Activated T-helper 1 cell treated with anti-CD3 and anti-CD28 coated beads, Interleukin-12 subunit alpha, Interleukin-12 subunit beta, Interleukin-2, Interleukin-4 antibody, amounts not matched to agents 30 ng/mL and 10 ng/mL and 1 ng/mL, durations not matched to agents 14 hours and 24 hours and 36 hours (primary cell): ENCODE measurements at regions of chr14 and their contacts with region 1.

Region 1: DNA sequence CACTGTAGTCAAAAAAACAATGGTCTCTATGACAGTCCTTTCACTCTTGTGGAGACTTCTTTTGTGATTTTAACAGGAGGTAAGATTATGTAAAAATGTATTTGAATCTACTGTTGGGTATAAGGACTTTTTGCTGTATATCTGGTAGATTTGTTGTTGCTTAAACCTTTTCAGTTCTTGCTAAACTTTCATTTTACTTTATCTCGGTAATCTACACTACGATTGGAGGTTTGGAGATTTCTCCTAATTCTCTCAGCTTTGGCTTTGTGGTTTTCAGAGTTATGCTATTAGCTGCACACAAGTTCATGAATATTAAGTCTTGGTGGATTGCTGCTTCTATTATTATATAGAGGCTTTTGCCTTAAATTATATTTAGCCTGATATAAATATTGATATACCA is 116.6 kb upstream of the HIF1A start:
- DNase-seq: no peak
- H3K4me3 Mint-ChIP-seq: no peak overlapping the region
- H3K27ac Mint-ChIP-seq: no peak overlapping the region
- H3K4me1 Mint-ChIP-seq: peaks cover 39% of the 10 kb centered on the region
- H3K27me3 Mint-ChIP-seq: peaks cover 7% of the 10 kb centered on the region

Region 2: DNA sequence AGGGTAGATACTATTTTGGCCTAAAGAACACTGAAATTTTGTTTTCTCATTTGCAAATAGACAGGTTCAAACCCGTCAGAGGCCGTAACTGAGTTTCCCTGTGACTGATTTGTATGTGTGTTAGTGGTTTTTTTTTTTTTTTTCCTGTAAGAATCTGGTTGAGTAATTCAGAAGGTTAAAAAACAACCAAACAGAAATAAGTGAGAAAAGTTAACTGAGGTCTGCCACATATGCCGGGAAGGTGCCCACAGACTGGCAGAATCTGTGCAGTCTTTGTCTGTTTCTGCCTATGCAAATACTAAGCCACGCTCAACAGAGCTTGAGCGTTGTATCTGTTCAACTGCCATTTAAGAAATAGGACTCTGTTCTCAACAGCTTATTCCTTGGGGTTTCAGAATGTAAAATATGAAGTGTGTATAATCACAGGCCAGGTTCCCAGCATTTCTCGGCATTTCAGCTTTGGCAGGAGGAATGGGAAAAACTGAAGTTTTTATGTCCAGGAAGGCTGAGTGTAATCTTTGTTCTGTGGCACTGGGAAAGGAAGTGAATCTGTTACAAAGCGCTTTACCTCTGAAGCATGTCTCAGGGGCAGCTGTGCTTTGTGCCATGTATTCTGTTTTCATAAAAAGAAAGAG is 75.5 kb before region 1 on chr14:
- intact Hi-C with region 1: no loop called
- DNase-seq: peak; percentile 51
- H3K4me3 Mint-ChIP-seq: peak overlapping the region; percentile 76
- H3K27ac Mint-ChIP-seq: peak overlapping the region; percentile 99
- H3K4me1 Mint-ChIP-seq: peaks cover 94% of the 10 kb centered on the region
- H3K27me3 Mint-ChIP-seq: no peaks in the 10 kb centered on the region

Region 3: DNA sequence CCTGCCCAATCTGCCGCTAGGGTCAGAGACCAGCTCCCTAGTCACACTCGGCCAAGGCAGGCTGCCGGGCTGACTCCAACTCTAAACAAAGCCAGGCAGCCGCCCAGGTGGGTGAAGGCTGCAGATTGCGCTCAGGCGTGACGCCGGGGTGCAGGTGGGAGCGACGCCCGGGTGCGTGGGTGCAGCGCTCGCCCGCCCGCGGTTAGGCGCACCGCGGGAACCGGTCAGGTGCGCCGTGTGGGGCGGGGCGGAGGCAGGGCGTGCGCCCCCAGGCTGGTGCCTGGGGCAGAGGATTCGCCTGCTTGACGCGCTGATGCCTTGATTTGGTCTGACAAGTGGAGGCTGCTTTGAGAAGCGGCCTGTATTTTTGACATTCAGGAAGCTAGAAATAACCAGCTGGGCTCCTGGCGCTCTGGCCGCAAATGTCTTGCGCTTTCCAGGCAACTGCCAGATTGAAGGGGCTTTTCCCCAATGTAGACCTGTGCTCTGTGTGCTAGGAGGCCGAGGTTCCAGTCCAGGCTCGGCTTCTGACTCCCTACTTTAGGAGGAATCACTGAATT is 10.1 kb before region 1 on chr14:
- intact Hi-C with region 1: loop called (anchors 1 kb)
- DNase-seq: peak; percentile 55
- H3K4me3 Mint-ChIP-seq: peak overlapping the region; percentile 75
- H3K27ac Mint-ChIP-seq: peak overlapping the region; percentile 66
- H3K4me1 Mint-ChIP-seq: peaks cover 94% of the 10 kb centered on the region
- H3K27me3 Mint-ChIP-seq: no peaks in the 10 kb centered on the region

Region 4: GRCh38 chr14:61644834-61645233 is 66.1 kb after region 1 on chr14:
- intact Hi-C with region 1: no loop called
- DNase-seq: no peak
- H3K4me3 Mint-ChIP-seq: no peak overlapping the region
- H3K27ac Mint-ChIP-seq: no peak overlapping the region
- H3K4me1 Mint-ChIP-seq: peaks cover 23% of the 10 kb centered on the region
- H3K27me3 Mint-ChIP-seq: peaks cover 2% of the 10 kb centered on the region